IMR-90 (cell line): ENCODE measurements at regions of chr7 and their contacts with region 1.

Region 1: DNA sequence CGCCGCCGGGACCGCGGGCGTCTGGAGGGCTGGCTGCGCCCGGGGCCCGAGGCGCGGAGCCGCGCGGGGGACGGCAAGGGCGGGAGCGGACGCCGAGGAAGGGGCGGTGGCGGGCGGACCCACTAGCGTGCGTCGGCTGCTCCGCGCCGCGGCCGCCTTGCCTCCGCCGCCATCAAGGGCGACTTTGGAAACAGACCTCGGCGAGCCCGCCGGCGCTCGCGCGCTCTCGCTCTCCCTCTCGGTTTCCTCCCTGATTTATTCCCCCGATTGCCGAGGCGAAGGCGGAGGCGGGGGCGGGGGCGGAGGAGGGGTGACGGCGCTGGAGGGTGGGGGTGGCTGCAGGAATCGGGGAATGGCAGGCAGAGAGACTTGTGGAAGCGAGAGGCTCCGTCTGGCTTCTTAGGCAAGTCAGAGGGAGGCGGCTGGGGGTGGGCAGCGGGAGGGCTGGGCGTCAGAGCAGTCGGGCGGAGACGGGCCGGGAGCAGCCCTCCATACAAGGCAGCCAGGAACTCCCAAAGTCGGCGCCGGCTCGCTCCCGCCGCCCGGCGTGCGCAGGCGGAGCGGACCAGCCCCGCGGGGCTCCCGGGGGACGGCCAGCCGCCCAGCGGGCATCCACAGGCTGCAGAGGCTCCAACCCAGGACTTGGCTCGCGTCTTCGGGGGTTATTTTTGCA is at the start of gene CACNA2D1:
- DNase-seq: peak; percentile 91
- ATAC-seq: peak; percentile 91
- H3K4me3 ChIP-seq: peak within 1 kb of the TSS; percentile 96
- H3K27ac ChIP-seq: peak within 1 kb of the TSS; percentile 98
- H3K4me1 ChIP-seq: peaks cover 2% of the 10 kb centered on the region
- H3K27me3 ChIP-seq: no peaks in the 10 kb centered on the region
- CTCF ChIP-seq: peak; percentile 37
- POLR2A ChIP-seq: peak; percentile 53; the same call in 1 of the 2 replicates
- RAD21 ChIP-seq: peak; percentile 39; the same call in 1 of the 2 replicates
- total RNA-seq, gene CACNA2D1: 21.9 and 32.2 TPM in 2 replicates

Region 2: DNA sequence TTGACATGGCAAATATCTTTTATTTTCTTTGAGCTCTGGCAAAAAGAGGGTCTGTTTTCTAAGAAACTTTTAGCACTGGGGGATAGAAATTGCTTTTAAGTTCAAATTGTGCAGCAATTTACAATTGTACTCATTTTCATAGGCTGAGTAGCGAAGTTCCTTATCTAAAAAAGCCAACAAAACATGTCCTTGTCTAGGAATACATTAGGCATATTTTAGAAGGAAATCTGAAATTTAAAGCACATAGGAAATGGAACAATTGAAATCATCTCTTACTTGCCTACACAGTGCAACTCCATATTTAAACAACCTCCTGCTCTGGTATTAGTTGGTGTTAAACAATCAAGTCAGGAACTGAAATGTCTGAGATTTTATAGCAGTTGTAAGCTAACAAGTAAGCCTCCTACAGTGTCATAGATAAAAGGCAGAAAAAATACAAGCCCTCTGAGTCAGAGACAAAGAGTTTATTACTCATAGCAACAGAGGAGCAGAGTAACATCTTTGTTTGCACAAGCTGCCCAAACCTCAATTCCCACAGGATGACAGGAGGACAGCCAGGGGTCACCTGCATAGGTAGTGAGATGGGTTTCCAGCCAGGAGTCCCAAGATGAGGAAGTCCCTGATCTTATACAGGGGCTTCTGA is 393.7 kb before region 1 on chr7:
- CTCF ChIA-PET with region 1: no interaction called
- POLR2A ChIA-PET with region 1: no interaction called
- dilution Hi-C with region 1: no loop called
- in situ Hi-C with region 1: no loop called
- intact Hi-C with region 1: loop called (anchors 5 kb)
- DNase-seq: peak; percentile 91
- ATAC-seq: peak; percentile 90
- H3K4me3 ChIP-seq: no peak overlapping the region
- H3K27ac ChIP-seq: peak overlapping the region; percentile 19; the same call in 1 of the 2 replicates
- H3K4me1 ChIP-seq: peaks cover 9% of the 10 kb centered on the region
- H3K27me3 ChIP-seq: no peaks in the 10 kb centered on the region
- CTCF ChIP-seq: no peak
- POLR2A ChIP-seq: no peak
- RAD21 ChIP-seq: no peak